ENCODE measurements at regions of chr19 and their contacts with region 1.

Region 1: DNA sequence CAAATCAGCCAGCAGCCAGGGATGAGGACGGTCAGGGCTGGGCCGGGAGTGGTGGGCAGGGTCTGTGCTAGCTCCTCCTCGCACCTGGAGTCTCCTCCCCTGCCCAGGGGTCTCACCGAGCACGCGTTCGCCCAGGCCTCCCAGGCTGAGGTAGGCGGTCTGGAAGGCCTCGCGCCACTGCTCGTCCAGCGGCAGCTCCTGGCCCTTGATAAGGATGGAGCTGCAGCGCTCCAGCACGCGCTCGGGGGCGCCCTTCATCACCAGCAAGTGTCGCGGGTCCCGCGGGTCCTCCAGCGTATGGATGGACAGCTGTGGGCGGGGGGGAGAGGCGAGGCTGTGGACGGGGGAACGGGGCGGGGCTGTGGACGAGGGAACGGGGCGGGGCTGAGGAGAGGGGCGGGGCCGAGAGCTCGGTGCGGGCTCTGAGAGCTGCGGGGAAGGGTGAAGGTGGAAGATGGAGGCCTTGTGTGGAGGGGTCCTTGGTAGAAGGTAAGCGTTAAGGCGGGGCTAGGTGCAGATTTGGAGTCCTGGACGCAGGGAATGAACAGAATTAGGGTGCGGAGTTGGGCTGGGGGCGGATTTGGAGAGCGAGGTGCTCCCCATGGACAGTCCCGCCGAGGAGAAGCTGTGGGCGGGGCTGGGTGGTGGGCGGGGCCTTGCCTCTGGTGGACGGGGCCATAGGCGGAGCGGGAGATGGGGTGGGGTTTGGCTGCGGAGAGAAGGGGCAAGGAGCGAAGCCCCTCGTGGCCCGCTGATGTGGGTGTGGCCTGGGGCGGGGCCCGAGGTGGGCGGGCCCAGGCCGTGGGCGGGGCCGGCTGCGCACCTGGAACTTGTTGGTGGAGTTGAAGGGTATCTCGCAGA is 5.7 kb downstream of the ATP4A start:
- DNase-seq: peak; percentile 83 to 89
- ATAC-seq: peak; percentile 42 to 81
- H3K4me3 ChIP-seq: peak overlapping the region; percentile 51
- H3K27ac ChIP-seq: peak overlapping the region in 1 of 2 experiments; percentile 62; a peak in 3 of 6 replicates
- H3K4me1 ChIP-seq: 0 out of 3 replicates have a peak, but pooled peaks cover 6% of the 10 kb centered on the region
- CTCF ChIP-seq: no peak
- EP300 ChIP-seq: no peak
- POLR2A ChIP-seq: no peak
- RAD21 ChIP-seq: no peak

Region 2: DNA sequence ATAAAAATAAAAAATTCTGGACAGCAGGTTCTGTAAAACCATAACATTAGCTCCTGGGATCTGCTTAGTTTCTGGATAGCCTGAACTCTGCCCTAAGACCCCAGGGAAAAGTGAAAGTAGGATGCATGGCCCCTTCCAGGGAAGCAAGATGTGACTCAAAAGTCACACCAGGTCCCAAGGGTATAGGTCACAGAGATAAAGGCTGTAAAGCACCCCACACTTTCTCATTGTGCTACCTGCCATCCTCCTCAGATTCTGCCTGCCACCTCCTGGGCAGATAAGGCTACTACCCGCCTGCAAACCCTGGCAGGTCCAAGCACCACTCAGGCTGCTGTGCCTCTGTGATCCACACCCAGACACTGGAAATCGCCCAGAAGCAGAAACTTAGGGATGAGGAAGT is 89.1 kb before region 1 on chr19:
- CTCF ChIA-PET with region 1: no interaction called
- POLR2A ChIA-PET with region 1: no interaction called
- DNase-seq: peak; percentile 72 to 82
- ATAC-seq: peak; percentile 99
- H3K4me3 ChIP-seq: no peak overlapping the region
- H3K27ac ChIP-seq: no peak overlapping the region
- H3K4me1 ChIP-seq: no peaks in the 10 kb centered on the region
- CTCF ChIP-seq: peak; percentile 74
- EP300 ChIP-seq: no peak
- POLR2A ChIP-seq: no peak
- RAD21 ChIP-seq: peak; percentile 80 to 85

Region 3: GRCh38 chr19:35569281-35569781 is 11.6 kb after region 1 on chr19:
- CTCF ChIA-PET with region 1: interaction called, 13 read pairs
- POLR2A ChIA-PET with region 1: no interaction called
- DNase-seq: no peak
- ATAC-seq: no peak
- H3K4me3 ChIP-seq: no peak overlapping the region
- H3K27ac ChIP-seq: no peak overlapping the region
- H3K4me1 ChIP-seq: no peaks in the 10 kb centered on the region
- CTCF ChIP-seq: no peak
- EP300 ChIP-seq: no peak
- POLR2A ChIP-seq: no peak
- RAD21 ChIP-seq: no peak

Region 4: GRCh38 chr19:35612559-35613321 is 55.0 kb after region 1 on chr19 and contains the start of gene HAUS5:
- CTCF ChIA-PET with region 1: interaction called, 29 read pairs
- POLR2A ChIA-PET with region 1: interaction called, 3 read pairs
- DNase-seq: peak; percentile 98 to 99
- ATAC-seq: peak; percentile 92 to 96
- H3K4me3 ChIP-seq: peak within 1 kb of the TSS; percentile 75
- H3K27ac ChIP-seq: peak within 1 kb of the TSS; percentile 72 to 87
- H3K4me1 ChIP-seq: peaks cover 9% of the 10 kb centered on the region; the same call in 2 of the 3 replicates
- CTCF ChIP-seq: no peak; the same call in 2 of the 3 replicates
- EP300 ChIP-seq: no peak
- POLR2A ChIP-seq: peak; percentile 84
- RAD21 ChIP-seq: no peak; a peak in 1 of 5 replicates
- polyA plus RNA-seq, gene HAUS5: 7.2 and 7.3 TPM in 2 replicates

Region 5: GRCh38 chr19:35693830-35694599 is 136.2 kb after region 1 on chr19:
- CTCF ChIA-PET with region 1: interaction called, 19 read pairs
- POLR2A ChIA-PET with region 1: no interaction called
- DNase-seq: peak; percentile 95 to 97
- ATAC-seq: peak; percentile 99
- H3K4me3 ChIP-seq: no peak overlapping the region
- H3K27ac ChIP-seq: 0 out of 6 replicates have a peak overlapping the region, but pooled peaks of 1 of the 2 experiments have one; percentile 4
- H3K4me1 ChIP-seq: no peaks in the 10 kb centered on the region
- CTCF ChIP-seq: peak; percentile 100
- EP300 ChIP-seq: no peak
- POLR2A ChIP-seq: no peak
- RAD21 ChIP-seq: peak; percentile 99 to 100

Region 6: GRCh38 chr19:35716801-35717666 is 159.3 kb after region 1 on chr19:
- CTCF ChIA-PET with region 1: interaction called, 18 read pairs
- POLR2A ChIA-PET with region 1: no interaction called
- DNase-seq: peak; percentile 95 to 99
- ATAC-seq: peak; percentile 74 to 91
- H3K4me3 ChIP-seq: peak overlapping the region; percentile 87
- H3K27ac ChIP-seq: peak overlapping the region; percentile 91 to 98
- H3K4me1 ChIP-seq: peaks cover 20% of the 10 kb centered on the region
- CTCF ChIP-seq: peak; percentile 100
- EP300 ChIP-seq: no peak
- POLR2A ChIP-seq: peak; percentile 74
- RAD21 ChIP-seq: peak; percentile 89 to 99